ENCODE measurements at regions of chr6 and their contacts with region 1.

Region 1: DNA sequence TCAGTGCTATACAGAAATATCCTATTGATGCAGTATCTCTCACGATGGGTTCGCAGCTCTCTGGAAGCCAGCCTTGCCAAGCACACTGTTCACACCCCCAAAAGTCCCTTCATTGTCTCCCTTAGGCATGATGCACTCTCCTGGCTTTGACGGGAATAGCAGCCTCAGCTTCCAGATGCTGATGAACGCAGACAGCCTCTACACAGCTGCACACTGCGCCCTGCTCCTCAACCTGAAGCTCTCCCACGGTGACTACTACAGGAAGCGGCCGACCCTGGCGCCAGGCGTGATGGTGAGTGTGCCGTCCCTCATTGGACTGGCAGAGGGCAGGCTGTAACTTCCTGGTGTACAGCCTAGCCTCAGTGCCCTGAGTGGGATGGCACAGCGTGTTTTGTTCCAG is 60.0 kb upstream of the PBOV1 start:
- DNase-seq: no peak
- H3K4me3 ChIP-seq: no peak overlapping the region
- H3K27ac ChIP-seq: no peak overlapping the region
- H3K4me1 ChIP-seq: no peaks in the 10 kb centered on the region
- H3K27me3 ChIP-seq: no peaks in the 10 kb centered on the region
- CTCF ChIP-seq: peak; percentile 10 to 34
- POLR2A ChIP-seq: no peak

Region 2: GRCh38 chr6:138001750-138002349 is 276.5 kb before region 1 on chr6:
- CTCF ChIA-PET with region 1: no interaction called
- POLR2A ChIA-PET with region 1: no interaction called
- dilution Hi-C with region 1: no loop called
- intact Hi-C with region 1: loop called (anchors 5 kb)
- DNase-seq: peak; percentile 62
- H3K4me3 ChIP-seq: no peak overlapping the region
- H3K27ac ChIP-seq: no peak overlapping the region
- H3K4me1 ChIP-seq: no peaks in the 10 kb centered on the region
- H3K27me3 ChIP-seq: no peaks in the 10 kb centered on the region
- CTCF ChIP-seq: peak; percentile 69 to 82
- POLR2A ChIP-seq: no peak

Region 3: DNA sequence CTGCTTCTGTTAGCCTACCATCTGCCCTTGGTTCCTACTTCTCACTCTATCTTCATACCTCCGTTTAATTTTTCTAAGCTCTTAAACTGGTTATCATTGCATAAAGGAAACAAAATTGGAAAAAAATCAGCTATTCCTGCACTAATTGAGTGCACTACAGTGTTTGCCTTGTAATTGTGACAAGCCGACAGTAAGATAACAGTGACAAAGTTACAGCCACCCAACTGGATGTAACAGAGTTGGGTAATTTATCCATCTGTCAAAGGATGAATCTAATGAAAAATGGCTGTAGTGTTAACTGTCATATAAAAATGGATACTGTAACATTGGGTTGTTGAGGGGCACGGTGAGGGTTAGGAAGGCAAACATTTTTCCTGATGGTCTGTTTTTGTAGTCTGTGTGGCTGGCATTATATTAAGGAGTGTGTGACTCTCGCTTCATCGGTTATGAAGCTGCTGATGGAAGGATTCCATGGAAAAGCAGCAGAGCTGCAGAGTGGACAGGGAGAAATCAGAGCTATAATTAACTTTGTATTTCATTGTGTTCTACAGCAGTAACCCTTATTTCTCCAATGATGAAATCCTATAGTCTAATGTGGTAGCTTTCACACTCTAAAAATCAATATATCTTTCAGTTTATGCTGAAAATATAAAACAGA is 72.8 kb before region 1 on chr6:
- CTCF ChIA-PET with region 1: no interaction called
- POLR2A ChIA-PET with region 1: no interaction called
- dilution Hi-C with region 1: no loop called
- intact Hi-C with region 1: no loop called
- DNase-seq: no peak
- H3K4me3 ChIP-seq: no peak overlapping the region
- H3K27ac ChIP-seq: no peak overlapping the region
- H3K4me1 ChIP-seq: no peaks in the 10 kb centered on the region
- H3K27me3 ChIP-seq: no peaks in the 10 kb centered on the region
- CTCF ChIP-seq: no peak
- POLR2A ChIP-seq: no peak

Measured in endothelial cell of umbilical vein (primary cell).